ENCODE measurements at regions of chr18 and their contacts with region 1.

Region 1: DNA sequence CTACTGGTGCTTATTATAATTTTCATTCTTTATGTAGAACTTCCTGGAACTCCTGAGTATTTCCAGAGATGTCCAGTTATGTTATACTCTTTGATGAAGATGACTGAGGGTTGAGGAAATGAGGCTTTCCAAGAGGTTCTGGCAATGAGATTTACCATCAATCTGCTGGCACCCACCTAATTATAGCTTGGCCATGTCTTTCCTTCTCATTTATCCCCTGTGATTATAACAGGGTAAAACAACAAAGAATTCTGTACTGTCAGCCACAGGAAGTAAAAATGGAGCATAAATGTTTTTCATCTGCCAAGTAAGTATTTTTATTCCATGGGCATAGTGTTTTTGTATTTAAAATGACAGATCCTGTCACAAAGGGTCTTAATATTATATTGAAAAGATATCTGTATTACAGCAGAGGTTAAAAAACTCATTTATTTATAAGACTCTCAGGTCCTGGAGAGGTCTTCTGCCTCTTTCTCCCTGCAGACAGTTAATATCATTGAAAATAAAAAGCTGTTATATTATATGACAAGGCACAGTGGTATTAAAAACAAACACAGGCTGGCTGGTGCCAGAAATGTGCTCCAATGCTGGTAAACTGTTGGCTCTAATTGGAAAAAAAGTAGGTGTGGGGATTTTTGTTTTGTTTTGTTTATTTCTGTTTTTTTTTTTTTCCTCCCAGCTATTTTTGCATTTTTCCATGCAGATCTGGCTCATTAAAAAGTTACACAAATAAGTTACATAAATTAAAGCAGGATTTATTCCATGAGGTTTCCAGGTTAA is 1764.1 kb upstream of the CELF4 start:
- DNase-seq: no peak
- ATAC-seq: no peak
- H3K4me3 ChIP-seq: no peak overlapping the region
- H3K27ac ChIP-seq: no peak overlapping the region
- H3K4me1 ChIP-seq: no peaks in the 10 kb centered on the region
- H3K27me3 ChIP-seq: no peaks in the 10 kb centered on the region
- CTCF ChIP-seq: no peak

Region 2: GRCh38 chr18:39039828-39040227 is 289.9 kb before region 1 on chr18:
- intact Hi-C with region 1: loop called in 1 of 10 experiments (anchors 10 kb)
- DNase-seq: no peak
- ATAC-seq: no peak
- H3K4me3 ChIP-seq: no peak overlapping the region
- H3K27ac ChIP-seq: no peak overlapping the region
- H3K4me1 ChIP-seq: no peaks in the 10 kb centered on the region
- H3K27me3 ChIP-seq: no peaks in the 10 kb centered on the region
- CTCF ChIP-seq: no peak

Region 3: GRCh38 chr18:39448942-39449341 is 119.3 kb after region 1 on chr18:
- intact Hi-C with region 1: no loop called
- DNase-seq: no peak
- ATAC-seq: no peak
- H3K4me3 ChIP-seq: no peak overlapping the region
- H3K27ac ChIP-seq: no peak overlapping the region
- H3K4me1 ChIP-seq: peaks cover 0 to 11% (median 8%) of the 10 kb centered on the region in 9 donors
- H3K27me3 ChIP-seq: no peaks in the 10 kb centered on the region
- CTCF ChIP-seq: no peak

Region 4: GRCh38 chr18:39561126-39561525 is 231.4 kb after region 1 on chr18:
- intact Hi-C with region 1: no loop called
- DNase-seq: no peak
- ATAC-seq: peak in 2 of 8 donors; percentile 28 to 37
- H3K4me3 ChIP-seq: no peak overlapping the region
- H3K27ac ChIP-seq: no peak overlapping the region
- H3K4me1 ChIP-seq: peaks cover 0 to 12% (median 0%) of the 10 kb centered on the region in 9 donors
- H3K27me3 ChIP-seq: no peaks in the 10 kb centered on the region
- CTCF ChIP-seq: no peak